ENCODE measurements at regions of chr11 and their contacts with region 1.

Region 1: DNA sequence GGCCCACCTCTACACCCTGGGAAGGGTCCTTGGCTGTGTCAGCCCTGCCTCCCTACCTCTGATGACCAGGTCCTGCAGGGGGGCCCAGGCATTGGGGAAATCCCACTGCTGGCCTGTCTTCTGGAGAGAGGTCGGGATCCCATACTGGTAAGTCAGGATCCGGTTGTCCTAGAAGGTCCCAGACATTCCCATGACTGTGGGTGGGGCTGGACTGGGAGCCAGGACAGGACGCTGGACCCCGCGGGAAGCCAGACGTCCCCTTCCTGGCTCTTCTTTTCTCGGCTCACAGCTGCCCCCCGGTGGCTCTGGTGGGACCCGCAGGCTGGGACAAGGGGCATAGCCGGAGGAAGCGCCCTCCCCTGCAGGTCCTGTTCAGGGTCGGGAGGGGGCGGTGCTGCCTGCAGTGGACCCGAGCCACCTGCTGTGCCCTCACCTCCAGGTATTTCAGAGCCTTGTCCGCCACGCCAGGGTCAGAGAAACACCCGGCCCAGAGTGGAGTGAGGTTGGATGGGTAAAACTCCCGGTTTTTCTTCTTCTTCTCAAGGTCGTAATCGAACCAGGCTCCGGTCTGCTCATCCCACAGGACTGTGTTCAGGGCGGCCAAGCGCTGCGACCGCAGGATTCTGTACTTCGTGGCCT is 20.0 kb downstream of the TREH start:
- DNase-seq: peak; percentile 74 to 94 (median 86)
- ATAC-seq: peak; percentile 95
- H3K4me3 ChIP-seq: no peak overlapping the region
- H3K27ac ChIP-seq: peak overlapping the region in 1 of 2 donors; percentile 59
- H3K4me1 ChIP-seq: peaks cover 9 to 10% of the 10 kb centered on the region in 2 donors
- H3K27me3 ChIP-seq: peaks cover 0 to 5% of the 10 kb centered on the region in 2 donors
- CTCF ChIP-seq: peak; percentile 95 to 98

Region 2: DNA sequence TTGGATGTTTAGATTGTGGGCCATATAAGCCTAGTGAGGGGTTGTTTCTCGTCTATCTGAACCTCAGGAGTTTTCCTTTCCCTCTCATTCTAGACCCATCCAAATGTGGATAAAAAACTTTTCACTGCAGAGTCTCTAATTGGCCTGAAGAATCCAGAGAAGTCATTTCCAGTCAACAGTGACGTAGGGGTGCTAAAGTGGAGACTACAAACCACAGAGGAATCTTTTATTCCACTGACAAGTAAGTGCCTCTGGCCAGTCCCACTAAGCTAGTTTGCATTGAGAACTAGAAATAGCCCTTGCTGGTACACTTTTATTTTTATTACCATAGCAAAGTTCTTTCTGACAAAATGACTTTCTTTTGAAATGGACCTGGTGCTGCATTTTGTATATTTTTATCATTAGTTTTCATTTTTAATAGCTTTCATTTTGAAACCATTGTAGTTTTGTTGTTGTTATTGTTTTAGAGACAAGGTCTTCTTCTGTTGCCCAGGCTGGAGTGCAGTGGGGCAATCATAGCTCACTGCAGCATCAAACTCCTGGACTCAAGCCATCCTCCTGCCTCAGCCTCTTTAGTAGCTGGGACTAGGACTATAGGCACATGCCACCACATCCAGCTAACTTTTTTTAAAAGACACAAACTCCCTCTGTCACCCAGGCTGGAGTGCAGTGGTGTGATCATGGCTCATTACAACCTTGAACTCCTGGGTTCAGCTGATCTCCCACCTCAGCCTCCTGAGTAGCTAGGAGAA is 66.6 kb before region 1 on chr11:
- intact Hi-C with region 1: loop called in 1 of 2 experiments (anchors 10 kb)
- DNase-seq: no peak
- ATAC-seq: peak; percentile 30
- H3K4me3 ChIP-seq: no peak overlapping the region
- H3K27ac ChIP-seq: no peak overlapping the region
- H3K4me1 ChIP-seq: peaks cover 0 to 10% of the 10 kb centered on the region in 2 donors
- H3K27me3 ChIP-seq: no peaks in the 10 kb centered on the region
- CTCF ChIP-seq: no peak

Region 3: DNA sequence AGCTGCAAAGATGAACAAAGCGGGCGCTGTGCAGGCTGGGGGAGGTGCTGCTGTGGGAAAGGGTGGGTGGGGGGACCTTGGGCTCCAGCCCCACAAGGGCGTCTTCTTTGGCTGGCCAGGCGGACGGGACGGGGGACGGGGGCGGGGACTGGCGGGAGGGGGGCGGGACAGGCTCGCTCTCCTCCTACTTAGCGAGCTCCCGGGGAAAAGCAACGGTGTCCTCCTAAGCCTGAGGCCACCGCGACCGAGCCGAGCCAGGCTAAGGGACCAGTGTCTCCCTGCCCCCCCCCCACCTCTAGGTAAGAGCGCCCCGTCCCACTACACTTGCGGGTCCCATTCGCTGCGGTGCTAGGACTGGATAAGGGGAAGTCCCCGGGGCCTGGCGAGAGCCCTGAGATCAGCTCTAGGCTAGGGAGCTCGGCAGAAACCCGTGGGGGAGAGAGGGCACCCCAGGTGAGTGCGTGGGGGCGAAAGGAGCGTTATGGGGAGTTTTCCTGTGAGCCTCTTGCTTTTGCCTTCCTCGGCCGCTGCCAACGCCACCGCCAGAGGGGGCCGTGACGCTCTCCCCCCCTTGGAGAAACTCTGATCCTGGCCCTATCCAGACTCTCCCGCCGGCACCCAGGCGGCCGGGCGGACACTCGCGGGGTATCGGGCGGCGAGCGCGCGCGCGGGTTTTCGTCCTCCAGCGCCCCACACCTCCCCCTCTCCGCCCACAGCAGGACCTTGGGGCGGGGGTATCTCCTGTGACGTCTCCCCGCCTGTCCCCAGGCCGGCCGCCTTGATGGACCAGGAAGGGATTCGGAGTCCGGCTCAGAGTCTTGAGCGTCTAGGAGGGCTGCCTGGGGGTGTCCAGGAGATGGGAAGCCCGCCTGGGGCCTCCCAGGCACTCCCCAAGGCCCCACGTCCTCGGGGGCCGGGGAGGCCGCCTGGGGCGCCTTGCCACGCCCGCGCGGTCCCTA is 51.8 kb before region 1 on chr11 and contains the start of gene PHLDB1:
- intact Hi-C with region 1: loop called in 1 of 2 experiments (anchors 10 kb)
- DNase-seq: peak in 3 of 4 donors; percentile 57 to 88 (median 66)
- ATAC-seq: peak; percentile 57
- H3K4me3 ChIP-seq: peak within 1 kb of the TSS; percentile 63 to 68
- H3K27ac ChIP-seq: peak within 1 kb of the TSS; percentile 88 to 93
- H3K4me1 ChIP-seq: peaks cover 25 to 58% of the 10 kb centered on the region in 2 donors
- H3K27me3 ChIP-seq: peaks cover 4 to 58% of the 10 kb centered on the region in 2 donors
- CTCF ChIP-seq: peak in 1 of 2 donors; percentile 61
- polyA plus RNA-seq, gene PHLDB1: 82.0 to 105 (median 91.7) TPM

Measured in left lung (tissue), 14 donors.